Transverse colon (tissue), 4 donors: ENCODE measurements at regions of chr19 and their contacts with region 1.

Region 1: DNA sequence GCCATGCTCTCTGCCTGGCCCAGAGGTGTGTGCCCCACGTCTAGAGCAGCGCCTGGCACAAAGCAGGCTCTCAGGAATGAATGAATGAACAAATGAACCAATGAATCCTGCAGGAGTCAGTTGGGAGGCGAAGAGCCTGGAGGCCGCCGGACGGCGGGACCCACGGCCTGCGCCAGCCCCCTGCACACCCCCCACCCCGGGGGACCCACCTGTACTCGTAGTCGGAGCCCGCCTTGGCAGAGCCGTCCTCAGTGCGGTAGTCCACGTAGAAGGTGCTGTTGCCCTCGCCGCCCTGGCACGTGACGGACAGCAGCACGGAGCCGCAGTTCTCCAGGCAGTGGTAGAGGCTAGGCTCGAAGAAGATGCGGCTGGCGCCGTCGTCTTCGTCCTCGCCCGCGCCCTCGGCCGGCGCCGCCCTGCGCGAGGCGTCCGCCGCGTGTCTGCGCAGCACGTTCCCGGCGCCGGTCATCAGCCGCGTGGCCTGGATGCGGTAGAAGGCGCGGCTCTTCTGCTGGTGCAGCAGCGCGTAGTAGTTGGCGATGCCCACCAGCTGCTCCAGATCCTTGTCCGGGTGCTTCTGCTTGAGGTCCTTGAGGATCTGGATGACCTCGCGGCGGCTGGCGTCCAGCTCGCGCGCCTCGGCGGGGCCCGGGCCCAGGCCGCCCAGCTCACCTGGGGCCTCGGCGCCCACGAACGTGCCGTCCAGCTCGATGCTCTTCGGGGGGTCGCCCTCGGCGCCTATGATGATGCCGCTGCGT is 14.8 kb downstream of the SLC8A2 start:
- DNase-seq: no peak
- H3K4me3 ChIP-seq: no peak overlapping the region
- H3K27ac ChIP-seq: no peak overlapping the region
- H3K4me1 ChIP-seq: peaks cover 0 to 8% (median 4%) of the 10 kb centered on the region in 4 donors
- H3K27me3 ChIP-seq: peaks cover 78% of the 10 kb centered on the region
- CTCF ChIP-seq: no peak
- EP300 ChIP-seq: no peak
- POLR2A ChIP-seq: no peak

Region 2: GRCh38 chr19:47428177-47428894 is 28.6 kb before region 1 on chr19:
- in situ Hi-C with region 1: no loop called
- intact Hi-C with region 1: loop called (anchors 1 kb)
- DNase-seq: peak; percentile 80
- H3K4me3 ChIP-seq: peak overlapping the region in 1 of 4 donors; percentile 6
- H3K27ac ChIP-seq: peak overlapping the region; percentile 2 to 66 (median 55)
- H3K4me1 ChIP-seq: peaks cover 6 to 33% (median 27%) of the 10 kb centered on the region in 4 donors
- H3K27me3 ChIP-seq: peaks cover 82% of the 10 kb centered on the region
- CTCF ChIP-seq: no peak
- EP300 ChIP-seq: no peak
- POLR2A ChIP-seq: no peak